ENCODE measurements at regions of chr1 and their contacts with region 1.

Region 1: GRCh38 chr1:151070474-151071276 is at the start of gene GABPB2:
- DNase-seq: peak; percentile 93
- ATAC-seq: peak; percentile 86
- H3K4me3 Mint-ChIP-seq: peak within 1 kb of the TSS; percentile 99
- H3K27ac Mint-ChIP-seq: peak within 1 kb of the TSS; percentile 100
- H3K4me1 Mint-ChIP-seq: peaks cover 18% of the 10 kb centered on the region
- H3K27me3 Mint-ChIP-seq: no peaks in the 10 kb centered on the region
- total RNA-seq, gene GABPB2: 16.6 to 19.2 TPM

Region 2: GRCh38 chr1:150309770-150310508 is 760.7 kb before region 1 on chr1:
- CTCF ChIA-PET with region 1: no interaction called
- POLR2A ChIA-PET with region 1: no interaction called
- intact Hi-C with region 1: no loop called
- DNase-seq: no peak
- ATAC-seq: no peak
- H3K4me3 Mint-ChIP-seq: no peak overlapping the region
- H3K27ac Mint-ChIP-seq: no peak overlapping the region
- H3K4me1 Mint-ChIP-seq: no peaks in the 10 kb centered on the region
- H3K27me3 Mint-ChIP-seq: no peaks in the 10 kb centered on the region

Region 3: GRCh38 chr1:150674881-150675280 is 395.8 kb before region 1 on chr1:
- CTCF ChIA-PET with region 1: no interaction called
- POLR2A ChIA-PET with region 1: interaction called, 12 read pairs
- intact Hi-C with region 1: no loop called
- DNase-seq: no peak
- ATAC-seq: no peak
- H3K4me3 Mint-ChIP-seq: no peak overlapping the region
- H3K27ac Mint-ChIP-seq: no peak overlapping the region
- H3K4me1 Mint-ChIP-seq: peaks cover 6% of the 10 kb centered on the region
- H3K27me3 Mint-ChIP-seq: no peaks in the 10 kb centered on the region

Region 4: GRCh38 chr1:151024540-151025146 is 46.0 kb before region 1 on chr1:
- CTCF ChIA-PET with region 1: interaction called, 5 read pairs
- POLR2A ChIA-PET with region 1: no interaction called
- intact Hi-C with region 1: loop called (anchors 2 to 5 kb)
- DNase-seq: peak; percentile 91
- ATAC-seq: peak; percentile 100
- H3K4me3 Mint-ChIP-seq: peak overlapping the region; percentile 30
- H3K27ac Mint-ChIP-seq: peak overlapping the region; percentile 65
- H3K4me1 Mint-ChIP-seq: peaks cover 5% of the 10 kb centered on the region
- H3K27me3 Mint-ChIP-seq: no peaks in the 10 kb centered on the region

Region 5: GRCh38 chr1:151146412-151147140 is 75.9 kb after region 1 on chr1 and contains the start of gene SEMA6C:
- CTCF ChIA-PET with region 1: no interaction called
- POLR2A ChIA-PET with region 1: no interaction called
- intact Hi-C with region 1: loop called in 1 of 2 experiments (anchors 2 kb)
- DNase-seq: peak; percentile 92
- ATAC-seq: peak; percentile 100
- H3K4me3 Mint-ChIP-seq: peak within 1 kb of the TSS; percentile 79
- H3K27ac Mint-ChIP-seq: peak within 1 kb of the TSS; percentile 48
- H3K4me1 Mint-ChIP-seq: peaks cover 10% of the 10 kb centered on the region
- H3K27me3 Mint-ChIP-seq: no peaks in the 10 kb centered on the region
- total RNA-seq, gene SEMA6C: 3.2 to 3.5 TPM

Region 6: GRCh38 chr1:151165738-151166505 is 95.2 kb after region 1 on chr1 and contains the starts of genes LYSMD1 and SCNM1:
- CTCF ChIA-PET with region 1: interaction called, 4 read pairs
- POLR2A ChIA-PET with region 1: no interaction called
- intact Hi-C with region 1: loop called in 1 of 2 experiments (anchors 1 kb)
- DNase-seq: peak; percentile 98
- ATAC-seq: peak; percentile 96
- H3K4me3 Mint-ChIP-seq: peak within 1 kb of the TSS; percentile 92
- H3K27ac Mint-ChIP-seq: peak within 1 kb of the TSS; percentile 98
- H3K4me1 Mint-ChIP-seq: peaks cover 48% of the 10 kb centered on the region
- H3K27me3 Mint-ChIP-seq: no peaks in the 10 kb centered on the region
- total RNA-seq, gene LYSMD1: 4.3 to 5.1 TPM
- total RNA-seq, gene SCNM1: 64.3 to 90.8 TPM

Region 7: GRCh38 chr1:151210830-151211229 is 140.2 kb after region 1 on chr1:
- CTCF ChIA-PET with region 1: no interaction called
- POLR2A ChIA-PET with region 1: no interaction called
- intact Hi-C with region 1: no loop called
- DNase-seq: no peak
- ATAC-seq: peak; percentile 48
- H3K4me3 Mint-ChIP-seq: no peak overlapping the region
- H3K27ac Mint-ChIP-seq: peak overlapping the region; percentile 12
- H3K4me1 Mint-ChIP-seq: peaks cover 36% of the 10 kb centered on the region
- H3K27me3 Mint-ChIP-seq: no peaks in the 10 kb centered on the region

Region 8: GRCh38 chr1:151265446-151266236 is 195.0 kb after region 1 on chr1:
- CTCF ChIA-PET with region 1: no interaction called
- POLR2A ChIA-PET with region 1: no interaction called
- intact Hi-C with region 1: no loop called
- DNase-seq: no peak
- ATAC-seq: no peak
- H3K4me3 Mint-ChIP-seq: no peak overlapping the region
- H3K27ac Mint-ChIP-seq: no peak overlapping the region
- H3K4me1 Mint-ChIP-seq: no peaks in the 10 kb centered on the region
- H3K27me3 Mint-ChIP-seq: no peaks in the 10 kb centered on the region

Region 9: GRCh38 chr1:151327223-151327902 is 256.7 kb after region 1 on chr1 and contains the start of gene PI4KB:
- CTCF ChIA-PET with region 1: no interaction called
- POLR2A ChIA-PET with region 1: no interaction called
- intact Hi-C with region 1: loop called in 1 of 2 experiments (anchors 1 kb)
- DNase-seq: peak; percentile 92
- ATAC-seq: peak; percentile 94
- H3K4me3 Mint-ChIP-seq: peak within 1 kb of the TSS; percentile 92
- H3K27ac Mint-ChIP-seq: peak within 1 kb of the TSS; percentile 95
- H3K4me1 Mint-ChIP-seq: peaks cover 30% of the 10 kb centered on the region
- H3K27me3 Mint-ChIP-seq: no peaks in the 10 kb centered on the region
- total RNA-seq, gene PI4KB: 53.0 to 54.5 TPM